ENCODE measurements at regions of chr16 and their contacts with region 1.

Region 1: DNA sequence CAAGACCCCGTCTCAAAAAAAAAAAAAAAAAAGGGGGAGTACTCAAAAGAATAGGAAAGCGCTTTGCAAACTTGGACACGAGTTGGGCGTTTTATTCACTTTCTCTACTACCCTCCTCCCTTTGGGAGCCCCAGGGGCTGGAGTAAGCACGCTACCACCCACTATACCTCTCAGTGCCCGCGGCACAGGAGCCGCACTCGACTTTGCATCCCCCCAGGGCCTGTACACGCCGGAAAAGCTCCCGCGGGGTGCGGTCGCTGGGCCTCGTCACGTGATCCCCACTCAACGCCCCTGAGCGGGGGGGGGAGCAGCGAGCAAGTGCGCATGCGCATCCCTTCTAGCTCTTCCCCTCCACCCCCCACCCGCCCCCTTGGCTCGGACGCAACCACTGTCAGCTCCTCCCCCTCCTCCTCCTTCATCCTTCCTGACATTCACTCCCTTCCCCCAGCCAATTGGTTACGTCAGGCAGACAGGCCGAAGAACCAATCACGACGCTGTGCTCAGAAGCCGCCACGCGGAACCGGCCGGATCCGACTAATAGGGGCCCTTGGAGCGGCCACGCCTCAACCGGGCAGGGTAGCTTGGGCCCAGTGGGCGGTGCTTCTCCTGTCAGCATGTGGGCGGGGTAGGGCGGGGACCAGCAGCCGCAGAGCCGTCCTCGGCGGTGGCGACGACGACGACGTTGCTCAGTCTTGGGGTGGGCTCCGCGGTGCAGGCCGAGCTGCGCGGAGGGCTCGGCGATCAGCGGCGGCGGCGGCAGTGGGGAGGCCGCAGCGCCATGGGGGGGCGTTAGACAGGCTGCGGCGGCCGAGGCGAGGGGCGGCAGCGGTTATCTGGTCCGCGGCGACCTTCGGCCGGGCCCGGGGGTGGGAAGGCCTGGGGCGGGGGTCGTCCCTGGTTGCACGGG is at the start of gene HAPSTR1:
- DNase-seq: peak; percentile 100
- ATAC-seq: peak; percentile 94
- H3K4me3 ChIP-seq: peak within 1 kb of the TSS; percentile 93
- H3K27ac ChIP-seq: peak within 1 kb of the TSS; percentile 98
- H3K4me1 ChIP-seq: no peaks in the 10 kb centered on the region; the same call in 1 of the 2 replicates
- H3K27me3 ChIP-seq: no peaks in the 10 kb centered on the region
- CTCF ChIP-seq: no peak
- POLR2A ChIP-seq: peak; percentile 98
- RAD21 ChIP-seq: no peak
- total RNA-seq, gene HAPSTR1: 56.5 and 81.9 TPM in 2 replicates

Region 2: DNA sequence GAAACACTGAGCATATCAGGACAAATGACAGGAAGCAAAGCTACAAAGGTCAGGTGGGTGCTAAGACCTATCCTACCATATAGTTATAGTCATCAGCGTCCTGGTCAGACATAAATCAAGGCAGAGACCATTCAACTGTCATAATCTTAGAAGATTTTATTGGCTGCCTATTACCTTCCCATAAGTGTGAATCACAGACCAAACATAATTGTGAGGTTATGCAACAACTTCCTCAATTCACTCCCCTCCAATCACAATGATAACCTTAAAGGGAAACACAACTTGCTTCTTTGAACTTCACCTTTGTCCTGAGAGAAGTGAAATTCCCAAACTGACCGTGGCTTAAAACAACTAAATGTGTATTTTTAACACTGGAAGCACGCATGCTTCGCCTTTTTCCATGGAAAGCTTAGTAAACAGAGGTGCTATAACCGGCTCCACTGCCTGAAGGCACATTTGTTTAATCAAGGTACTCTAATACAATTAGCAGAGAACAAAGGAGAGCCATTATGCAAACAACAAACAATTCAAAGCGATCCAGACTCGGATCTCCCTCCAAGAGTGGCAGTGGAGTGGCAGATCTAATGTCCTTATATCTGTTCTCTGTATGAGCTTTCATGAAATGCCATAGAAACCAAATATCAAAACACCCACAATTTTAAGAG is 585.8 kb before region 1 on chr16:
- CTCF ChIA-PET with region 1: no interaction called
- POLR2A ChIA-PET with region 1: no interaction called
- dilution Hi-C with region 1: no loop called
- in situ Hi-C with region 1: no loop called
- intact Hi-C with region 1: no loop called
- DNase-seq: no peak
- ATAC-seq: no peak
- H3K4me3 ChIP-seq: no peak overlapping the region
- H3K27ac ChIP-seq: no peak overlapping the region
- H3K4me1 ChIP-seq: no peaks in the 10 kb centered on the region
- H3K27me3 ChIP-seq: no peaks in the 10 kb centered on the region
- CTCF ChIP-seq: no peak
- POLR2A ChIP-seq: no peak
- RAD21 ChIP-seq: no peak

Region 3: GRCh38 chr16:8845699-8846298 is 245.4 kb before region 1 on chr16:
- CTCF ChIA-PET with region 1: no interaction called
- POLR2A ChIA-PET with region 1: no interaction called
- dilution Hi-C with region 1: no loop called
- in situ Hi-C with region 1: no loop called
- intact Hi-C with region 1: no loop called
- DNase-seq: no peak
- ATAC-seq: no peak
- H3K4me3 ChIP-seq: no peak overlapping the region
- H3K27ac ChIP-seq: no peak overlapping the region
- H3K4me1 ChIP-seq: peaks cover 21% of the 10 kb centered on the region
- H3K27me3 ChIP-seq: no peaks in the 10 kb centered on the region
- CTCF ChIP-seq: no peak
- POLR2A ChIP-seq: no peak
- RAD21 ChIP-seq: no peak

Region 4: DNA sequence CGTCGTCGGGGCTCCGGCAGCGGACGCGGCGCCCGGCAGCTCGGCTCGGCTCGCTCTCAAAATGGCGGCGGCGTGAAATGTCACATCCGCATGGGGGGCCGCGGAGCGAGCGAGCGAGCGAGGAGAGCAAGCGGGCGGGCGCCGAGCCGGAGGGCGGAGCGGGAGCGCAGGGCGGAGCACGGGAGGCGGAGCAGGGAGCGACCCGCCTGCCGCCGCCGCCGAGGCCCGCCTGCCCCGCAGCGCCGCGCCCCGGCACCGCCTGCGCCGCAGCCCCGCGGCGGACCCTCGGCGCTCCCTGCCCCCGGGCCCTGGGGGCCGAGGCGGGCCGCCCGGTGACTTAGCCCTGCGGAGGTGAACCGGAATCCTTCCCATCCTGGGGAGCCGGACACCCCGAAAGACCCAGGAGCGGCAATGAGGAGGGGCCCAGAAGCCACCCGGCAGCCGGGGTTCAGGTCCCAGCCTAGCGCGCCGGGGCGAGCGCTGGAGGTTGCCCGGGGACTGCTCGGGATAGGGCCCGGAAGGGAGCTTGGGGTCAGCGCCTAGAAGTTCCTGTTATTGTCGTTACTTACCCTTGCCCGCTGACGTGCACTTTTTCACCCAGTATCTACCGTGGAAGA is 127.3 kb before region 1 on chr16 and contains the start of gene USP7:
- CTCF ChIA-PET with region 1: no interaction called
- POLR2A ChIA-PET with region 1: no interaction called
- dilution Hi-C with region 1: no loop called
- in situ Hi-C with region 1: loop called (anchors 10 kb)
- intact Hi-C with region 1: loop called (anchors 5 kb)
- DNase-seq: peak; percentile 86
- ATAC-seq: peak; percentile 97
- H3K4me3 ChIP-seq: peak within 1 kb of the TSS; percentile 72
- H3K27ac ChIP-seq: peak within 1 kb of the TSS; percentile 78
- H3K4me1 ChIP-seq: peaks cover 18% of the 10 kb centered on the region
- H3K27me3 ChIP-seq: no peaks in the 10 kb centered on the region
- CTCF ChIP-seq: no peak
- POLR2A ChIP-seq: peak; percentile 77
- RAD21 ChIP-seq: no peak
- total RNA-seq, gene USP7: 28.3 and 45.8 TPM in 2 replicates

Region 5: DNA sequence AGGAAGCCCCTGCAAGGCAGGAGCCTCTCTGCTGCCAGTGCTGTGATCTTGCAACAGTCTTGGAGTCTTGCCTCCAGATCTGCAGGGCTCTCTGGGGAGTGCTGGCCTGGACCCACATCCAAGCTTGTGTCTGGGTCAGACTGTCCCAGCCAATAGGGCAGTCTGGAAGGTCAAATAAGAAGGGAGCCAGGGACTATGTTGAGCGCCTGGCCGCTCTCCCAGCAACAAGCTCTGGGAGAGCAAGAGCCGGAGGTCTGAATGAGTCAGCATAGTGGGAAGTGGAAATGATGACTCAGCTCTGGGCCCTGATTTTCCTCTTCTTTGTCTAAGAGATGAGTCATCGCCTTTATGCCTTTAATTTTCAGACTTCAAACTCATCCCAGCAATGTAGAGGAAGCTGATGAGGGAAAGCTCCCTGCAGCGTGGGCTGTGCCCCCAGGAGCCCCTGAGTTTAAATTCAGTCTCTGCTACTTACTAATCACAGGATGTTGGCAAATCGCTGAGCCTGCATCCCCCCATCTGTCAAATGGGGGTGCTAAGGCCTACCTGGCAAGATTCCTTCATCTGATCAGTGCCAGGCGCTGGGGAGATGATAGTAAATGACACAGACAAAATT is 43.4 kb before region 1 on chr16:
- CTCF ChIA-PET with region 1: no interaction called
- POLR2A ChIA-PET with region 1: interaction called, 3 read pairs
- dilution Hi-C with region 1: no loop called
- in situ Hi-C with region 1: no loop called
- intact Hi-C with region 1: loop called (anchors 2 kb)
- DNase-seq: peak; percentile 99
- ATAC-seq: peak; percentile 89
- H3K4me3 ChIP-seq: no peak overlapping the region
- H3K27ac ChIP-seq: peak overlapping the region; percentile 74
- H3K4me1 ChIP-seq: peaks cover 12% of the 10 kb centered on the region
- H3K27me3 ChIP-seq: no peaks in the 10 kb centered on the region
- CTCF ChIP-seq: no peak
- POLR2A ChIP-seq: no peak; the same call in 1 of the 2 replicates
- RAD21 ChIP-seq: no peak; the same call in 1 of the 2 replicates

Region 6: GRCh38 chr16:9123871-9124270 is 32.7 kb after region 1 on chr16:
- CTCF ChIA-PET with region 1: no interaction called
- POLR2A ChIA-PET with region 1: no interaction called
- dilution Hi-C with region 1: no loop called
- in situ Hi-C with region 1: no loop called
- intact Hi-C with region 1: no loop called
- DNase-seq: no peak
- ATAC-seq: no peak
- H3K4me3 ChIP-seq: no peak overlapping the region
- H3K27ac ChIP-seq: no peak overlapping the region
- H3K4me1 ChIP-seq: peaks cover 21% of the 10 kb centered on the region
- H3K27me3 ChIP-seq: no peaks in the 10 kb centered on the region
- CTCF ChIP-seq: no peak
- POLR2A ChIP-seq: no peak
- RAD21 ChIP-seq: no peak

Region 7: DNA sequence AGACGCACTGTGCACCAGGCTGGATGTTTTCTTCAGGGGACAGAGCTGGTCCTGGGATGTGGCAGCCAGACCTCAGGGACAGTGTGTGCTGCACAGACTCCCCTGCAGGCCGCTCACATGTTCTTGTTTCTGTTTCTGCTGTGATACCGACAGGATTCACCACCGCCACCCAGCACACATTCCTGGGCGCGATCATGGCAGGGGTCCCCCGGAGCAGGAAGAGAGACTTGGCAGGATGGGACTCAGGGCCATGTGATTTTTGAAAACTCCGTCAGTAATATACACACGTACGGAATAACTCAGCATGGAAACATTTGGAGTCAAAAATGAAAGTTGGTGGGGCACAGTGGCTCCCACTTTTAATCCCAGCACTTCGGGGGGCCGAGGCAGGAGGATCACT is 79.3 kb after region 1 on chr16:
- CTCF ChIA-PET with region 1: no interaction called
- POLR2A ChIA-PET with region 1: interaction called, 17 read pairs
- dilution Hi-C with region 1: no loop called
- in situ Hi-C with region 1: no loop called
- intact Hi-C with region 1: no loop called
- DNase-seq: no peak
- ATAC-seq: no peak
- H3K4me3 ChIP-seq: peak overlapping the region; percentile 33
- H3K27ac ChIP-seq: no peak overlapping the region
- H3K4me1 ChIP-seq: no peaks in the 10 kb centered on the region
- H3K27me3 ChIP-seq: no peaks in the 10 kb centered on the region; the same call in 1 of the 2 replicates
- CTCF ChIP-seq: no peak
- POLR2A ChIP-seq: no peak
- RAD21 ChIP-seq: no peak